Dendritic cell treated with granulocyte-macrophage colony-stimulating factor and Interleukin-4, amounts not matched to agents 40 ng/mL and 50 ng/mL, for 4 days (primary cell): ENCODE measurements at regions of chr1 and their contacts with region 1.

Region 1: DNA sequence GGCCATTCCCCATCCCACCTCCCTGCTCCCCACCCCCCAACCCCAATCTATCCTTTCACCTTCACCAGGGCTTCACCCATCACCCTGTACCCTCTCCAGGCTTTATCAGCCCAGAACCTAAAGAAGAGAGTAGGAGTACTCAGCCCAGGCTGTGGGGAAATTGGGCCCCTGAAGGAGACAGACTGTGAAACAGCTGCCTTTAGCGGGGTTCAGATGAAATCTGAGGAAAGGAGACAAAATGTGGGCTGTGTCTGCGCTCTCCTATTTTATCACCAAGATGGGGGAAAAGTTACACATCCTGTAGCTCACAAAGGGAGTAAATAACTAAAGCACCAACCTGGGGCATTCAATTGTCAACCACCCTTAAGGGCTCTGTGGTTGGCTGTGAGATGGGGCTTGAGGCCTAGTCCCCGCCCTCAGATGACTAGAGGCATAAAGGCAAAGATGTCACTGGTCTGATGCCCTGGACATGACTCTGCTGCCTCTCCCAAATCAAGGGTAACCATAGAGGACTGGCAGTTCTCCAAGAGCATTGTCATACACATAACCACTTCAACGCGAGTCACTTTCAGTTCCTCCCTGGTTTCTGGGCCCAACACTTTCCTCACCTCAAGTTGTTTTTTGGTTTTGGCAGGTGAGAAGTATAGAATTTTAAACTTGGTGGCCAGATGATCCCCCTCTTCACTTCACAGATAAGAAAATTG is 30.0 kb downstream of the SLC27A3 start:
- H3K4me3 Mint-ChIP-seq: no peak overlapping the region
- H3K27ac Mint-ChIP-seq: peak overlapping the region; percentile 76
- H3K4me1 Mint-ChIP-seq: peaks cover 72% of the 10 kb centered on the region
- H3K27me3 Mint-ChIP-seq: peaks cover 1% of the 10 kb centered on the region

Region 2: DNA sequence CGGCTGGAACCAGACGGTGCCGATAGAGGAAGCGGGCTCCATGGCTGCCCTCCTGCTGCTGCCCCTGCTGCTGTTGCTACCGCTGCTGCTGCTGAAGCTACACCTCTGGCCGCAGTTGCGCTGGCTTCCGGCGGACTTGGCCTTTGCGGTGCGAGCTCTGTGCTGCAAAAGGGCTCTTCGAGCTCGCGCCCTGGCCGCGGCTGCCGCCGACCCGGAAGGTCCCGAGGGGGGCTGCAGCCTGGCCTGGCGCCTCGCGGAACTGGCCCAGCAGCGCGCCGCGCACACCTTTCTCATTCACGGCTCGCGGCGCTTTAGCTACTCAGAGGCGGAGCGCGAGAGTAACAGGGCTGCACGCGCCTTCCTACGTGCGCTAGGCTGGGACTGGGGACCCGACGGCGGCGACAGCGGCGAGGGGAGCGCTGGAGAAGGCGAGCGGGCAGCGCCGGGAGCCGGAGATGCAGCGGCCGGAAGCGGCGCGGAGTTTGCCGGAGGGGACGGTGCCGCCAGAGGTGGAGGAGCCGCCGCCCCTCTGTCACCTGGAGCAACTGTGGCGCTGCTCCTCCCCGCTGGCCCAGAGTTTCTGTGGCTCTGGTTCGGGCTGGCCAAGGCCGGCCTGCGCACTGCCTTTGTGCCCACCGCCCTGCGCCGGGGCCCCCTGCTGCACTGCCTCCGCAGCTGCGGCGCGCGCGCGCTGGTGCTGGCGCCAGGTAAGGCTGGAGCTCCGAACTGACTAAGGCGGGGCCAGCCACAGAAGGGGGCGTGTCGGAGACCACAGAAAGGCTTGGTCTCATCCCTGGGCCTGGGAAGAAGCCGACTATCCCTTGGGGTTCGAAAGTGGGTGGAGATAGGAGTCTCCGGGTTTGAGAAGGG is 29.5 kb before region 1 on chr1:
- intact Hi-C with region 1: no loop called
- H3K4me3 Mint-ChIP-seq: peak overlapping the region; percentile 84
- H3K27ac Mint-ChIP-seq: peak overlapping the region; percentile 83
- H3K4me1 Mint-ChIP-seq: peaks cover 90% of the 10 kb centered on the region
- H3K27me3 Mint-ChIP-seq: no peaks in the 10 kb centered on the region

Region 3: GRCh38 chr1:153790966-153791647 is 14.1 kb before region 1 on chr1:
- intact Hi-C with region 1: loop called (anchors 2 kb)
- H3K4me3 Mint-ChIP-seq: peak overlapping the region; percentile 79
- H3K27ac Mint-ChIP-seq: peak overlapping the region; percentile 90
- H3K4me1 Mint-ChIP-seq: peaks cover 69% of the 10 kb centered on the region
- H3K27me3 Mint-ChIP-seq: no peaks in the 10 kb centered on the region

Region 4: DNA sequence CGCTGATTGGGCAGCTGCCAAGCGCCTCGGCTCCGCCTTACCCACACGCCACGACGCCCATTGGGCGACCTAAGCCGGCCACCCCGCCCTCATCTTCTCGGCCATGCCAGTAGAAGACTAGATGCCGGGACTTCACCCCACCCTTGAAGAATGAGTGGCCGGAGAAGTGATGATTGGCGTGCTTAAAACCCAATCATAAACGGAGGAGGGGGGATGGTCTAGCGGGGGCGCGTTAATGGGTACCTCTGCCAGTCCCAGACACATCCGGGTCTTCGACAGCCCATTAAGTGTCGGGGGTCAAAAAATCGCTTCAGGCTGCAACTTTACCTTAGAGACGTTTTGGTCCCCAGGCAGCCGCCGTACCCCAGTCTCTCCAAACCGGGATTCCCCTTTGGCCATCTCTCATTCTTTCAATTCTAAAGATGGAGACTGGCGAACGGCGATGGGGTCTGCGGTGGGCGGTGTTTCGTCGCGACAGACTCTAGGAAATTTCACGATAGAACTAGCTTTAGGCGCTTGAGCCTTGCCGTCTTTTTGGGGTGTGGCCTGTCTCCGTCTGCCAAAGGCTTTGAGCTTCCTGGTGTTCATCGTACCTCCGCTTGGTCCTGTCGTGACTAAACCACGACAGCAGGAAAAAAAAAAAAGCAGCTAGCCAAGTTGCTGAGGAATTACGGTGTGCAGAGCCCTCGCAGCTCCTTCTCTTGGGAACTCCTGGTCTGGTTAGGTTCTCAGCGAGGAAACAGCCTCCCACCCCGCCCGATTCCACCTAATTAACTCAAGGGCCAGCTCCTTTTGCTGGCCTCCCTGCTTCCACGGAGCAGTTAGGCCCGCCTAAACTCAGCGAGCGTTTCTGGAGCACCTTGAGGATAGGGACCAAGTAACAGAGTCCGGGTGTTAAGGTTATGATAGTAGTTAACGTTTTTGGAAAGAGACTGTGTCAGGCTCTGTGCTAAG is 118.1 kb after region 1 on chr1 and contains the start of gene GATAD2B:
- intact Hi-C with region 1: loop called (anchors 10 kb)
- H3K4me3 Mint-ChIP-seq: peak within 1 kb of the TSS; percentile 95
- H3K27ac Mint-ChIP-seq: peak within 1 kb of the TSS; percentile 92
- H3K4me1 Mint-ChIP-seq: peaks cover 41% of the 10 kb centered on the region
- H3K27me3 Mint-ChIP-seq: no peaks in the 10 kb centered on the region